Activated CD4-positive, alpha-beta T cell treated with anti-CD3 and anti-CD28 coated beads, Interleukin-2, amount 10 ng/mL, durations not matched to agents 7 days and 5 days (primary cell): ENCODE measurements at regions of chr2 and their contacts with region 1.

Region 1: DNA sequence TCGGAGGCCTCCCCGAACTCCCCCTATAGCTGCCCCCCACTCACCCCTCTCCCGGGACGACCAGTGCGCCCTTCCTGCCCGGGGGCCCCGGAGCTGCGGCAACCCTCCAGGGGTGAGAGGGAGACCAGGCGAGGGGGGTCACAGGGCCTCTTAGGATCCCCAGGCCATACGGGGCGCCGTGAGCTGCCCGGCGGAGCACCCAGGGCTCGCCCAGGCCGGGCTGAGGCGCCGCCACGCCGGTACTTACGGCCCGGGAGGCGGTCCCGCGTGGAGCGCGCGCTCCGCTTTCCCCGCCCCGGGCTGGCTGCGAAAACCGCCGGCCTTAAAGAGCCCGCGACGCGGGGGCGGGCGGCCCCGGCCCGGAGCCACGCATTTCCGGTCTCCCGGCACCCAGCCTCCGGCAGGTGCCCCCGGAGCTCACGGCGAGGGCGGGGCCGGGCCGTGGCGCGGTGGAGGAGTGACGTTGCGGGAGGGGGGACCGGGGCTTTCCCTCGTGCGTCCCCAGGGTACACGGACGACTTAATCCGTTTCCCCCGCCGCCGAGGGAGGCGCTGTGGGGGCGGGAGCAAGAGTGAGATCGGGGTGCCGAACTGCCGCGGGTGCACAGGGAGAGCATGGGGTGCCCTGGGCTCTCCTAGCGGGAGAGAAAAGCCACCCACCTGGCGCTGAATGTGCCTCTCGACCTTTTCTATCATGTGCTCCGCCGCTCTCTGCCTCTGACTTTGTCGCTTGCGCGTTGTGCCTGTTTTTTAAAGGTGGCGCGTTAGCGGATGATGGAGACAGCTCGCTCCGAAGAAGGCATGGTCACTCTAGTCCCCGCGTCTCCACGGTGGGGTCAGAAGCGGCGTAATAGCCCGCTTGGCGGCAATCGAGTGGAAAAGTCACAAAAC is at the start of gene METTL21A:
- DNase-seq: peak; percentile 93
- H3K4me3 Mint-ChIP-seq: peak within 1 kb of the TSS; percentile 93
- H3K27ac Mint-ChIP-seq: peak within 1 kb of the TSS; percentile 97
- H3K4me1 Mint-ChIP-seq: peaks cover 46% of the 10 kb centered on the region
- H3K27me3 Mint-ChIP-seq: no peaks in the 10 kb centered on the region
- total RNA-seq, gene METTL21A: 18.8 to 19.3 TPM

Region 2: DNA sequence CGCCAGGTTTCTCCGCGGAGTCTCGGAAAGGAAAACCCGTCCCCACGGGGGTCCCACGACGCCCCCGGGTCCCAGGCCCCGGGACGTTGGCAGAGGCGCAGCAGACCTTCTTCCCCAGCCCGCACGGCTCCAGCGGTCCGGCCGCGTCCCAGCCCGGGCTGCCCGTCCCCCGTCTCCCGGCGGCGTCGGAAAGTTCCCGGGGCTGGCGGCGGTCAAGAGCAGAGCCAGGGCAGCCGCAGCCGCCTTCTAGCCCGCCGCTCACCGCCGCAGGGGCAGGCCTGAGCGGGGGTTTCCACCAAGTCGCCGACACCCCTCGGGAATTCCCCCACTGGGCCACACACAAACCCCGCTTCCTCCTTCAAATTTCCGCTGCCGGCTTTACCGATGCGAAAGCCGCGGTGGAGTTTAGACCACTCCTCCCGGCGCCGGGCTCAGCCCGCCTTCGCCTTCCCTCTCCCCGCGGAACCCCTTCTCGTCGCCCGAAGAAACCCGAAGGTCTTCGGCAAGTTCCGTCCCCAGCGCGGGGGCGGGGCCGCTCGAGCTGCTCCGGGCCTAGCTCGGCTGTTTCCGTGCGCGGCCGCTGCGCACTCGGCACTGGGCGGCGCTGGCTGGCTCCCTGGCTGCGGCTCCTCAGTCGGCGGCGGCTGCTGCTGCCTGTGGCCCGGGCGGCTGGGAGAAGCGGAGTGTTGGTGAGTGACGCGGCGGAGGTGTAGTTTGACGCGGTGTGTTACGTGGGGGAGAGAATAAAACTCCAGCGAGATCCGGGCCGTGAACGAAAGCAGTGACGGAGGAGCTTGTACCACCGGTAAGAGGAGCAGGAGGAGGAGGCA is 95.7 kb before region 1 on chr2 and contains the start of gene CREB1:
- CTCF ChIA-PET with region 1: interaction called, 10 read pairs
- POLR2A ChIA-PET with region 1: interaction called, 12 read pairs
- DNase-seq: peak; percentile 99
- H3K4me3 Mint-ChIP-seq: peak within 1 kb of the TSS; percentile 96
- H3K27ac Mint-ChIP-seq: peak within 1 kb of the TSS; percentile 100
- H3K4me1 Mint-ChIP-seq: peaks cover 61% of the 10 kb centered on the region
- H3K27me3 Mint-ChIP-seq: peaks cover 3% of the 10 kb centered on the region
- total RNA-seq, gene CREB1: 92.5 to 118 TPM

Region 3: DNA sequence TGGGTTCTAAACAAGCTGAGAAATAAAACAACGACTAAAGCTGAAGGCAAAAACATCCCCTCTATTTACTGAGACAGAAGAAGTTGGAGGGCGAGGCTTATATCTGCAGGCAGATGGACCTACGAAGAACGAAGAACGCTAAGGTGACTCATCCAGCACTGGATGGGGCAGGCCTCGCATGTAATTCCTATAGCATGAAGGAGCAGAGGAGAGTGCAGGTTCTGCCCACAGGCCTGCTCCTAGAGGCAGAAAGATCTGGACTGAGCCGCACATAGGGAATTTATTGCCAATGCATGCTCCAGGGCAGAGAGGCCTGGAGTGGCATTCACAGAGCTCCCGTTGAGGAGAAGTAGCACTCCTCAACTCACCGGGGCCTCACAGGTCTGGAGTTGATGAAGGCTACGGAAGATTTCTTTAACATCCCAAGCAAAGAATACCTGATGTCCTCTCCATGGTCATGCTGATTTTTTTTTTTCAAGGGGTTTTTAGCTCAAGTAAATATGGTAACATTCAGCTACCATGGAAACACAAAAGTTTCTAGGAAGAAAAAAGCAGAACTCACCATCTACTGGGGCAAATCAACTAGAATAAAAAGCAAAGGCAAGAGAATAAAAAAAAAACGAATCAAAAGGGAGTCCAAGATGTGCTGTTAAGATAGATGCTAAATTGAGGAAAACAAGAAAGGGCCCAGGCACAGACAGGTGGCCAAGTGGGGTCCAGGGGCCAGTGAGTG is 10.4 kb after region 1 on chr2:
- CTCF ChIA-PET with region 1: interaction called, 17 read pairs
- POLR2A ChIA-PET with region 1: no interaction called
- DNase-seq: no peak
- H3K4me3 Mint-ChIP-seq: no peak overlapping the region
- H3K27ac Mint-ChIP-seq: no peak overlapping the region
- H3K4me1 Mint-ChIP-seq: peaks cover 5% of the 10 kb centered on the region
- H3K27me3 Mint-ChIP-seq: no peaks in the 10 kb centered on the region

Region 4: GRCh38 chr2:207676827-207677354 is 51.6 kb after region 1 on chr2:
- CTCF ChIA-PET with region 1: no interaction called
- POLR2A ChIA-PET with region 1: no interaction called
- DNase-seq: no peak
- H3K4me3 Mint-ChIP-seq: no peak overlapping the region
- H3K27ac Mint-ChIP-seq: no peak overlapping the region
- H3K4me1 Mint-ChIP-seq: no peaks in the 10 kb centered on the region
- H3K27me3 Mint-ChIP-seq: peaks cover 3% of the 10 kb centered on the region